MCF 10A (cell line): ENCODE measurements at regions of chr7 and their contacts with region 1.

Region 1: GRCh38 chr7:113710310-113711106 is 208.3 kb downstream of the PPP1R3A start:
- DNase-seq: peak; percentile 84
- H3K4me3 Mint-ChIP-seq: no peak overlapping the region
- H3K27ac Mint-ChIP-seq: no peak overlapping the region
- H3K4me1 Mint-ChIP-seq: peaks cover under 1% of the 10 kb centered on the region
- H3K27me3 Mint-ChIP-seq: no peaks in the 10 kb centered on the region
- CTCF ChIP-seq: peak; percentile 90

Region 2: GRCh38 chr7:113404245-113404644 is 306.3 kb before region 1 on chr7:
- CTCF ChIA-PET with region 1: interaction called, 11 read pairs
- POLR2A ChIA-PET with region 1: no interaction called
- intact Hi-C with region 1: loop called (anchors 1 kb)
- DNase-seq: peak; percentile 40
- H3K4me3 Mint-ChIP-seq: no peak overlapping the region
- H3K27ac Mint-ChIP-seq: no peak overlapping the region
- H3K4me1 Mint-ChIP-seq: no peaks in the 10 kb centered on the region
- H3K27me3 Mint-ChIP-seq: no peaks in the 10 kb centered on the region
- CTCF ChIP-seq: peak; percentile 33